Dendritic cell treated with granulocyte-macrophage colony-stimulating factor and Interleukin-4, amounts not matched to agents 40 ng/mL and 50 ng/mL, for 4 days (primary cell): ENCODE measurements at regions of chr13 and their contacts with region 1.

Region 1: DNA sequence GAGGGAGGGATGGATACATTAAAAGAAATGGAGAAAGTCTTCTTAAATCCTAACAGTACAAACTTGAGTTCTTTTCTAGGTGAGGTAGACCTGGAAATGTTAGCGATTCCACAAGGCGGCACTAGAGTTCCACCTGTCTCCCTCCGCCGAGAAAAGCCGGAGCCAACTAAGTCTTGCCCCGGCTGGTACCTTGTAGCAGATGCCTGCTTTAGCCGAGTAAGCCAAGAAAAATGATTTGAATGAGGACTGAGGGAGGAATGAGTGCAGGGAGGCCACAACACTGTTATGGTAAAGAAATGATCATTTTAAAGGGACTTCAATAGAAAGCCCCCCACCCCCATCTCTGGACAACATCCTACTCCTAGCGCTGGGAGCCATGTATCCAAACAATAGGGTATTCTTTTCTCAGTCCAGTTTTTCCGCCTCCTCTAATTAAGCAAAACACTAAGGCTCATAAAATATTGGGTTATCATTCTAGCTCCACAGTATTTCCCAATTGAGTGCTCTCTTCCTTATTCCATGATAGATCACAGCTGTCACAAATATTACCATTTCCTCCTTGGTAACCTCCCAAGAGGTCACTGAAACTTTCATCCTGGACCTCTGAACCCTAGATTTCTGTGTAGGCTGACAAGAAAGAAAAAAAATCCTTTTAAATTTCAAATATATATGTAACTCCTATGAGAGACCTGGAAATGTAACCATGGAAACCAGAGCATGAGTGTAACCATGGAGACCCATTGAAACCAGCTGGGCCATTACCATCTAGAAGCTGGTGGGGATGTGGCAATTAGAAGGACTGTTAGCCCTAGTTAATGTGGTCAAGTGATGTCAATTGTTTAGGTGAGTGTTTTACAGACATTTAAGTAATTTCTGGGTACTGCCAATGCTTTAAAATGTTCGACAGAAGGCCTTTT is 58.3 kb downstream of the GPALPP1 start:
- H3K4me3 Mint-ChIP-seq: peak overlapping the region; percentile 58
- H3K27ac Mint-ChIP-seq: no peak overlapping the region
- H3K4me1 Mint-ChIP-seq: peaks cover 39% of the 10 kb centered on the region
- H3K27me3 Mint-ChIP-seq: peaks cover 7% of the 10 kb centered on the region

Region 2: GRCh38 chr13:44961997-44962396 is 85.7 kb before region 1 on chr13:
- intact Hi-C with region 1: no loop called
- H3K4me3 Mint-ChIP-seq: no peak overlapping the region
- H3K27ac Mint-ChIP-seq: no peak overlapping the region
- H3K4me1 Mint-ChIP-seq: no peaks in the 10 kb centered on the region
- H3K27me3 Mint-ChIP-seq: no peaks in the 10 kb centered on the region

Region 3: DNA sequence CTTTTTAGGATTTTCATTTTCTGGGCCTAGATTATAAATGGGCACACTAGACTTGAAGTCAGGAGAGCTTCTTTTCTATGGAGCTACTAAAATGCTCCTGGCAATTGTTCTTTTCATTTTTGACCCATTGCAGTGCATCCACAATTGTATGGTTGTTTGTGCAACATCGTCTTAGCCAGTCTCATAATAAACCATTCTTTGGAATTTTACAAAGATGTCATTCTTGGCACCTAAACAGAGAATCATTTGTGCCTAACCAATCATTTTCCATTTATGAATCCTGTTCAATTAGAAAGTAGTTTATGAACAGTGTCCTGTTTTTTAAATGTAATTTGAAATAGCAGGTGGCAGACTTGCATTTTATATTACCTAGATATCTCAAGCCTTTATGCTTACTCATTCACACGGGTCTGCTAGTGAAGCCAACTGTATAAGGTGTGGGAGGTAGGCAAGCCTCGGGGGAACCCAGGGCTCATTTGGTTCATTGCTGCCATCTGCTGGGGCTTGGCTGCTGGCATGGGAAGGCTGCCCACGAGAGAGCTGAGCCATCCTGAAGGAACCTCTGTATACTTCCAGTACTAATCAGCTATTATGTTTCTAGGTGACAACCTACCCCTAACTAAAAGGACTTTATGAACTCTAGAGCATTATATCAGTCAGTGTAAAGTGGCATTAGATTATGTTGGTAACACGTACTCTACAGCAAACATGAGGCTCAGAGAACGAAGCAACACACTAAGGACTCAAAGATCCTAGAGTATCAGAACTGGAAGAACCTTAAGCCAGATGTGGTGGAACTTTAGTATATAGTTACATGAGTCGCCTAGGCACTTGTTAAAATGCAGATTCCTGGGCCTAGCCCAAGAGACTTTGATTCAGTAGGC is 233.3 kb after region 1 on chr13:
- intact Hi-C with region 1: loop called (anchors 1 kb)
- H3K4me3 Mint-ChIP-seq: no peak overlapping the region
- H3K27ac Mint-ChIP-seq: no peak overlapping the region
- H3K4me1 Mint-ChIP-seq: peaks cover 41% of the 10 kb centered on the region
- H3K27me3 Mint-ChIP-seq: no peaks in the 10 kb centered on the region

Region 4: DNA sequence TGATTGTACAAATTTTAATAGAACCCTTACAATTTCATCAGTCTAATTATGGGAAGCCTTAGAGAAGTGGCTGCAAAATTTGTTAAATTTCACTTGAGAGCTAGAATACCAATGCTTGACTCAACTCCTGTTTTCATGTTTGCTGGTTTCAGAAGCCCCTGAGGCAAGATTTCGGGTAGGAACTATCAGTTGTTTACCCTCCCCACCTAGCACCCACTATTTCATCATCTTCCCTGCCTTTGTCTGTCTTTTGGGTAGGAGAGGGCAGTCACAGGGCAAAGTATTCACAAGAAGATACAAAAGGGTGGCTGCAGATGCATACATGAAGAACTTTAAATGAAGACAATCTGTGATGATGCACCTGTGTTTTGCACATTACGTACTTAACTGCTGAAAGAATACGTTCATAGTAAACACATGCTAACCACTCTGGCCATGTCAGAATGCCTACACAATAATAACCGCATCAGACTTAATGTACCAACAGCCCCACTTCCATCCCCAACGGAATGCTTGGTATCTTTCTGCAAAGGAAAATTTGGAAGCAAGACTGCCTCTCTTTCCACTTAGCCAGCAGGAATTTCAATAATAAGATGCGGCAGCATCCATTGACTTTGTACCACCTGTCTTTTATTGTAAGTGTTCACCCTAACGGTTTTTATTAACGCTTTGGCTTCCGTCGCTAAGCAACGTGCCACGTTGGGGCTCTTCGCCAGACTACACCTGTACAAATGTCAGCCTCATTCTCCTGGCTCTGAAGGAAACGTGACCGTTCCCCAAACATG is 262.9 kb after region 1 on chr13:
- intact Hi-C with region 1: loop called (anchors 1 kb)
- H3K4me3 Mint-ChIP-seq: no peak overlapping the region
- H3K27ac Mint-ChIP-seq: no peak overlapping the region
- H3K4me1 Mint-ChIP-seq: peaks cover 17% of the 10 kb centered on the region
- H3K27me3 Mint-ChIP-seq: peaks cover 30% of the 10 kb centered on the region